Calu3 (cell line): ENCODE measurements at regions of chr12 and their contacts with region 1.

Region 1: GRCh38 chr12:18146363-18146762 is 56.4 kb upstream of the RERGL start:
- DNase-seq: no peak
- H3K4me3 Mint-ChIP-seq: peak overlapping the region; percentile 50
- H3K27ac Mint-ChIP-seq: peak overlapping the region; percentile 91
- H3K4me1 Mint-ChIP-seq: peaks cover 41% of the 10 kb centered on the region
- H3K27me3 Mint-ChIP-seq: no peaks in the 10 kb centered on the region
- CTCF ChIP-seq: no peak

Region 2: DNA sequence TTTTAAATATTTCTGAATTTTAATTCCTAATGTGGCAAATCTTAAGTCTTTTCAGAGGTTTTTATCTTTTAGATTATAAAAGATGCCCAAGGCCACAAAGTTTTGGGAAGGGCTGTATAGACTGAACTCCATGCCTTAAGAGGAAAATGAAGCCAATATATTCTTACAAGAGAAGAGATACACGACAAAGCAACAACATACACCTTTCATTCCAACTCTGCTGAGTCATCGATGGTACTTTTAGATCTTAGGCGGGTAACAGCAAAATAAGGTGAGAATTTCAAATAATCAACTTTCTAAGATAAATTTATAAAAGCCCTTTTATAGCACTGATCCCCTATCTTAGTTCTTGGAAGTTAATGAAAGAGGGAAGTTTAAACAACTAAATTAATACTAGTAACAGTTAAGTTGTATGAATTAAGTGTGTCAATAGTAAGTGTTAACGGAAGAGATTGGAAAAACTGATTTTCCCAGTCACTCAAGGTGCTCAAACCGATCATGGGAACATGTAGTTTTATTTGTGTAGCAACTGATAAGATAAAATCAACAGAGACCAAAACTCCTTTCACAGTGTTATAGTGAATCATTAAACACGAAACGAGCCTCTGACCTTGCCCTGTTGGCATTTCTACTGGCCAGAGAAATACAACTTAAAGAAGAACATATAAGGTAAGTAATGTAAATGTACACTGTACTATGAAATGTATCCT is 96.2 kb after region 1 on chr12:
- CTCF ChIA-PET with region 1: interaction called, 8 read pairs
- intact Hi-C with region 1: loop called (anchors 2 kb)
- DNase-seq: no peak
- H3K4me3 Mint-ChIP-seq: peak overlapping the region; percentile 56
- H3K27ac Mint-ChIP-seq: peak overlapping the region; percentile 96
- H3K4me1 Mint-ChIP-seq: peaks cover 23% of the 10 kb centered on the region
- H3K27me3 Mint-ChIP-seq: no peaks in the 10 kb centered on the region
- CTCF ChIP-seq: no peak

Region 3: DNA sequence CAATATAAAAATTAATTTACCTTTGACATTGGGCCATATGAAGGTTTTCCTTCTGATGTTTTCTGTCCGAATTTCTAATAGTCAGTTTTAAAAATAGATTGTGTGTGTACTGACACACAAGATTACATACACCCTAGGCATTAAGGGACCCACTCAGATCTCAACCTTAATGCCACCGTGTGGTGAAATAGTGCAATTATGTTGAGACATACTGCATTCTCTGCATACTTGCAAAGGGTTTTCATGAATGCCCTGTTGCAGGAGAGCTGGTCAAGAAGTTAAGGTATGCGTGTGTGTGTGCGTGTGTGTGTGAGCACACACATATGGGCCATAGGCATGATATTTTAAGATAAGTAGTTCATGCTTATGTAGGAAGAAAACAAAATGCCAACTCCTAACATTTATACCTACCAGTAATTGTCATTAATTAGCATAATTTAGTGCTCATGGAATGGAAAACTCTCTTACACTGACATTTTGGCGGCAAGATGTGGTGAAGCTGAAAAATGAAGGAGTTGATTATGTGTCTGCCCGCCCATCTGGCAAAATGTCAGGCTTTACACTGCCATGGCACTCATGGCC is 173.8 kb after region 1 on chr12:
- CTCF ChIA-PET with region 1: interaction called, 3 read pairs
- intact Hi-C with region 1: loop called (anchors 5 kb)
- DNase-seq: peak; percentile 71
- H3K4me3 Mint-ChIP-seq: peak overlapping the region; percentile 52
- H3K27ac Mint-ChIP-seq: peak overlapping the region; percentile 78
- H3K4me1 Mint-ChIP-seq: peaks cover 26% of the 10 kb centered on the region
- H3K27me3 Mint-ChIP-seq: no peaks in the 10 kb centered on the region
- CTCF ChIP-seq: peak; percentile 51